Gastrocnemius medialis (tissue), 4 donors: ENCODE measurements at regions of chr15 and their contacts with region 1.

Region 1: DNA sequence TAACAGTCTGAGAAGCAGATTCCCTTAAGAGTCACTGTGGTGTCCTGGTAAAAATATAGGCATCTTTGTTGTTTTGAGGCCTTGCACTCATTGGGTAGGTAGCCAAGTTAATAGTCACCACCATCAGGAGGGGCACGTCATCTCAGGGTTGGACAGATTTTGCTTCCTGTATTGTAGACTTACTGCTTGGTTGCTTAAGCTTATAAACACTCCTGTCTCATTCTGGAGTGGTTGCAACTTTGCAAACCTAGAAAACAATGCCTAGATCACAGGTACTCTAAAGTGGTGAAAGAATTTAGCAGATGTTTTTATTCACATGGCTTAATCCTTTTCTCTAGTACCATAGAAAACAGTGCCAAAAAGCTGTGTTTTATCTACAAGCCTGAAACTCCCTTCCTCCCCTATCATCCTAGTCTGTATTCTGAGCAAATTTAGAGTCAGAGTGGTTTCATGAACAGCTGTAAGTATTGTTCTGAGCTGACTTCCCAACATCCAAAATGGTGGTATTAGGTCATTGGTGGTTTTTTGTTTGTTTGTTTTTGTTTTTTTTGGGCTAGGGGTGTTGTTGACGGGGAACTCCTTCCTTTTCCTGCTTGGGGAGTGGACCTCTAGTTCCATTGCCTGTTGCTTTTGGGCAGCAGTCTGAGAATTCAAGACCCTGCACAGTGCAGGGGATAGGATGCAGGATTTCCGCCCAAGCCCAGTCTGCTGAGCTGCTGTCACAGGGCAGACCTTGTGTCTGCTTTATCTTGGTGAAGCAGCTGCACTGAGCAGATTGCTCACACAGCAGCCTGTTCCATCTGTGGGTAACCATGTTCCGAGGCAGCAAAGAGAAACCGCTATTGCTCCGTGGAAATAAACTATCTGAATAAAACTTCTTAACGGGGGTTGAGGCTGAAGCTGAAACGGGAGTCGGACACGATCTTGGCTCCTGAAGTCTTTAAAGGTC is 202.0 kb downstream of the AKAP13 start:
- DNase-seq: peak; percentile 77 to 78
- ATAC-seq: peak; percentile 62 to 68
- H3K4me3 ChIP-seq: peak overlapping the region; percentile 51 to 63 (median 60)
- H3K27ac ChIP-seq: peak overlapping the region; percentile 88 to 96 (median 90)
- H3K4me1 ChIP-seq: peaks cover 58 to 71% of the 10 kb centered on the region in 2 donors
- H3K27me3 ChIP-seq: no peaks in the 10 kb centered on the region
- CTCF ChIP-seq: no peak
- POLR2A ChIP-seq: peak; percentile 88 to 89

Region 2: DNA sequence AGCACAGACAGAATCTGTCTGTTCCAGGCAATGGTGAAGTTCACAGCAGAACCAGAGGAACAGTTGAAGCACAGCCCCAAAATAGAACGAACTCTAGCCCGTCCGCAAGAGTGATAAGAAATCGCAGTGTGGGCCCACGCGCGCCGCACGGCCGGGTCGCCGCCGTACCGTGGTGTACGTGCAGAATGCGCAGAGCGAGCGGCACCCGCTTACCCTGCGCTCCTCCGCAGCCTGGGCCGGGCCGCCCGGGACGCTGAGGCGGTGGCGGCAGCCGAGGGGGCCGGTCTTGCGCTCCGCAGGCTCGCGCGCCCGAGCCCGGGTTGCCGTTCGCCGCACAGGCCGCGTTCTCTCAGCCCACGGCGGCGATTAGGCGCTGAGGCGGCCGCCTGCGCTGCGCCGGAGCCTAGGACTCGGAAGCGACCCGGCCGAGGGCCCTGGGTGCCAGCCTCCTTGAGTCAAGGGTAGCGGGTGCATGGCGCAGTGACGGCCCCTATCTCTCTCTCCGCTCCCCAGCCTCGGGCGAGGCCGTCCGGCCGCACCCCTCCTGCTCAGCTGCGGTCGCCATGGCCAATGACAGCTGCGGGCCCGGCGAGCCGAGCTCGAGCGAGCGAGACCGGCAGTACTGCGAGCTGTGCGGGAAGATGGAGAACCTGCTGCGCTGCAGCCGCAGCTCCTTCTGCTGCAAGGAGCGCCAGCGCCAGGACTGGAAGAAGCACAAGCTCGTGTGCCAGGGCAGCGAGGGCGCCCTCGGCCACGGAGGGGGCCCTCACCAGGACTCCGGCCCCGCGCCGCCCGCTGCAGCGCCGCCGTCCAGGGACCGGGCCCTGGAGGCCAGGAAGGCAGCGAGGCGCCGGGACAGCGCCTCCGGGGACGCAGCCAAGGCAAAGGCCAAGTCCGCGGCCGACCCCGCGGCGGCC is 948.8 kb before region 1 on chr15:
- in situ Hi-C with region 1: no loop called
- intact Hi-C with region 1: loop called (anchors 5 kb)
- DNase-seq: peak; percentile 36 to 61
- ATAC-seq: peak; percentile 66 to 67
- H3K4me3 ChIP-seq: peak overlapping the region; percentile 64 to 85 (median 76)
- H3K27ac ChIP-seq: peak overlapping the region; percentile 83 to 97 (median 92)
- H3K4me1 ChIP-seq: peaks cover 40 to 41% of the 10 kb centered on the region in 2 donors
- H3K27me3 ChIP-seq: no peaks in the 10 kb centered on the region
- CTCF ChIP-seq: peak in 1 of 5 experiments; percentile 19
- POLR2A ChIP-seq: peak; percentile 22 to 34

Region 3: GRCh38 chr15:85330901-85331588 is 251.4 kb before region 1 on chr15:
- in situ Hi-C with region 1: no loop called
- intact Hi-C with region 1: loop called (anchors 5 kb)
- DNase-seq: peak; percentile 86 to 93
- ATAC-seq: peak; percentile 99
- H3K4me3 ChIP-seq: no peak overlapping the region
- H3K27ac ChIP-seq: peak overlapping the region; percentile 68 to 82 (median 76)
- H3K4me1 ChIP-seq: peaks cover 20 to 22% of the 10 kb centered on the region in 2 donors
- H3K27me3 ChIP-seq: no peaks in the 10 kb centered on the region
- CTCF ChIP-seq: peak; percentile 75 to 85 (median 76)
- POLR2A ChIP-seq: no peak

Region 4: DNA sequence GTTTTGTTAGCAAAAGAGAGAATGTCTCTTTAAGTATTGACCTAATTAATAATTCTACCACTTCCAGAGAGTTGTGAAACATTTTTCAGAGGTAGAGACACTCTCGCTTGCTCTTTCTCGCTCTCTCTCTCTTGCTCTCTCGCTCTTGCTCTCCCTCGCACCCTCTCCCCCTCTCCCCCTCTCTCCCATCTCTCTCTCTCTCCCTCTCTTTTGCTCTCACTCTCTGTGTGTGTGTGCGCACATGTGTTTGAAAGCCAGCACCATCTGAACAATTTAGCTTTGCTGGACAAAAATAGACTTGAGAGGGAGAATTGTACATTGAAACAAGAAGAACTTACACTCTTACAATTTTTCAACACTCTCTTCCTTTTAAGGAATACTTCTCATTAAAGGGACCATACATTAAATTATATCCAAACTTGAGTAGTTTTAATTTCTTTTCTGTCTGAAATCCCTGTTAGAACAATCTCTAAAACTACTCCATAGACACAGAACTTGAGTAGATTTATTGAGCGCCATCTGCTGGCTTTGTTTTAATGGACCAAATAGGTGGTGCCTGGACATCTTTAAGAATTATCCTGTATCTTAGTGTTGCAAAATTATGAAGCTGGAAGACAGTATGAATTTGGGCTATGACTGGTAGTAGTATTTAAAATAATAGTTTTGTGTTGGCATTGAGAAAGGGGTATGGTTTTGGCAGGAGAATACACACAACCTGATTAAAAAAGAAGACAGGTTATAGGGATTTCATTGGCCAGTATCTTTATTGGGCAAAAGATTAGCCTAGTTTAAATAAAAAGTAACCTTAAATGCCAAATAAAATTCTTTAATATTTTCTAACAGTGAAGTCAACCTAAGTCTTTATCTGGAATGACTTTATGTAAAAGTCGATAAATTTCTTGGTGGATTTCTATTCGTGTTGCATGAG is 77.4 kb before region 1 on chr15:
- in situ Hi-C with region 1: no loop called
- intact Hi-C with region 1: loop called (anchors 5 kb)
- DNase-seq: peak; percentile 6 to 20
- ATAC-seq: peak in 1 of 2 donors; percentile 65
- H3K4me3 ChIP-seq: no peak overlapping the region
- H3K27ac ChIP-seq: peak overlapping the region; percentile 27 to 49 (median 29)
- H3K4me1 ChIP-seq: peaks cover 18 to 23% of the 10 kb centered on the region in 2 donors
- H3K27me3 ChIP-seq: no peaks in the 10 kb centered on the region
- CTCF ChIP-seq: peak in 3 of 5 experiments; percentile 40 to 58 (median 53)
- POLR2A ChIP-seq: no peak

Region 5: DNA sequence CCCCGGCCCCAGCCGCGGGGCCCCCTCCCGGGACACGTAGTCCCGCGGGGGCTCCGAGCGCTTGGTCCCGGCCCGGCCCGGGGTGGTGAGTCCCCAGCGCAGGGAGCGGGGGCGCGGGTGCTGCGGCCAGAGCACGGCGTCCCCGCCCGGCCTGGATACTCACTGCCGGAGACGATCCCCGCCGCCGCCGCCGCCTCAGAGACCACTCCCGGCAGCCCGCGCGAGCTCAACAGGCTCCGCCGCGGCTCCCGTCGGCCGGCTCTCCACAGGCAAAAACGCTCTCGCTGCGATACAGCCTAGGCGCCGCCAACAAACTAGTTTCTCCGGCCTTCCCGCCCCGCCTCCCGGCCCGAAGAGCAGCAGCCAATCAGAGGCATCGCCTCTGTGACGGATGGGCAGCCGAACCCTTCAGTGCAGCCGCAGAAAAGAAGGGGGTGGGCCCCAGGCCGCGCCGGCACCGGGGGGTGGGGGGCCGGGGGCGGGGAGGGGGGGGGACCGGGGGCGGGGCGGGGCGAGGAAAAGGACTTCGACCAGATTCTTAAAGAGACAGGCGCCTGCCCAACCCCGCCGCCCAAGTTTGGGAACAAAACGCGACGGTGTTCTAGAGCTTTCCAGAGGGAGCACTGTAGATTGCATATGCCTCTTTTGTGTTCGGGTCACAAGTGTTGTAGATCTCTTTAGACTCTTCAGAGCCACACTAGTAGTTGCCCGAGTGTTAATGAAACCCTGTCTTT is 212.4 kb after region 1 on chr15 and contains the start of gene KLHL25:
- in situ Hi-C with region 1: no loop called
- intact Hi-C with region 1: loop called (anchors 5 kb)
- DNase-seq: peak; percentile 93 to 95
- ATAC-seq: peak; percentile 94 to 97
- H3K4me3 ChIP-seq: peak within 1 kb of the TSS; percentile 75 to 98 (median 92)
- H3K27ac ChIP-seq: peak within 1 kb of the TSS; percentile 86 to 99 (median 98)
- H3K4me1 ChIP-seq: peaks cover 20 to 23% of the 10 kb centered on the region in 2 donors
- H3K27me3 ChIP-seq: no peaks in the 10 kb centered on the region
- CTCF ChIP-seq: no peak
- POLR2A ChIP-seq: peak; percentile 83 to 92
- total RNA-seq, gene KLHL25: 4.8 to 7.0 (median 6.8) TPM

Region 6: DNA sequence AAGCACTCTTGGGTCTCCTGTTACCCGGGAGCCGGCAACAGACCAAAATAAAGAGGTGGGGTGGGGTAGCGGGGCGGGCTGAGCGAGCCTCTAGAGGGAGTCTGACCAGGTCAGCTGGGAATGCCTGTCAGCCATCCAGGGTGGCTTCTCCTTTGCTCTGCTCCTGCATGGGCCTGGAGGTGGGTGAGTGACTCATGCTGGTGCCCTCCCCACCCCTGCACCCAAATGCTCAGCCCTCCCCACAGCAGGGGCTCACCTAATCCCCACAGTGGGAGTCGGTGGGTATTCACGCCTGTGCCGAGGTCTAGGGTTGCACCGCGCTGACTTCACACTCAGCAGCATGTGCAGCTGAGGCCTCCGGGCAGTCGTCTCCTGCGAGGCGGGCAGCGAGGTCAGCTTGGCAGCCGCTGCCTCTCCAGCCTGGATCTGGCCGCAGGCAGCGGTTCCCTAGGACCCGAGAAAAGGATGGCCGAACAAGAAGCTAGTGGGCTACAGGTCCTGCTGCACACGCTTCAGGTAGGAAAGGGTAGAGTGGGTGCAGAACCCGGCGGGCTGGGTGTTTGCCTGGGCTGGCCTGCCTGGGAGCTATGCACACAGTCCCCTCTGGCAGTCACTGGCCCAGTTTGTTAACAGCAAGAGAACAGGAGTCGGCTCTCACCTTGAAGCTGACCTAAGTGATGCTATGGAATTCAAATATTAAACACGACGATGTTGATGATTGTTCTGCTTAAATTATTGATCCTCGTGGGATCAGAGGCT is 497.3 kb after region 1 on chr15 and contains the start of gene AGBL1:
- in situ Hi-C with region 1: no loop called
- intact Hi-C with region 1: loop called (anchors 5 kb)
- DNase-seq: peak; percentile 87 to 98
- ATAC-seq: peak; percentile 78 to 83
- H3K4me3 ChIP-seq: peak within 1 kb of the TSS; percentile 19 to 44 (median 31)
- H3K27ac ChIP-seq: peak within 1 kb of the TSS; percentile 89 to 92 (median 90)
- H3K4me1 ChIP-seq: peaks cover 81 to 85% of the 10 kb centered on the region in 2 donors
- H3K27me3 ChIP-seq: no peaks in the 10 kb centered on the region
- CTCF ChIP-seq: peak in 3 of 5 experiments; percentile 21 to 27 (median 24)
- POLR2A ChIP-seq: peak; percentile 42 to 85
- total RNA-seq, gene AGBL1: 3.8 to 29.7 (median 15.9) TPM